CD4-positive, alpha-beta T cell (primary cell): ENCODE measurements at regions of chrX and their contacts with region 1.

Region 1: DNA sequence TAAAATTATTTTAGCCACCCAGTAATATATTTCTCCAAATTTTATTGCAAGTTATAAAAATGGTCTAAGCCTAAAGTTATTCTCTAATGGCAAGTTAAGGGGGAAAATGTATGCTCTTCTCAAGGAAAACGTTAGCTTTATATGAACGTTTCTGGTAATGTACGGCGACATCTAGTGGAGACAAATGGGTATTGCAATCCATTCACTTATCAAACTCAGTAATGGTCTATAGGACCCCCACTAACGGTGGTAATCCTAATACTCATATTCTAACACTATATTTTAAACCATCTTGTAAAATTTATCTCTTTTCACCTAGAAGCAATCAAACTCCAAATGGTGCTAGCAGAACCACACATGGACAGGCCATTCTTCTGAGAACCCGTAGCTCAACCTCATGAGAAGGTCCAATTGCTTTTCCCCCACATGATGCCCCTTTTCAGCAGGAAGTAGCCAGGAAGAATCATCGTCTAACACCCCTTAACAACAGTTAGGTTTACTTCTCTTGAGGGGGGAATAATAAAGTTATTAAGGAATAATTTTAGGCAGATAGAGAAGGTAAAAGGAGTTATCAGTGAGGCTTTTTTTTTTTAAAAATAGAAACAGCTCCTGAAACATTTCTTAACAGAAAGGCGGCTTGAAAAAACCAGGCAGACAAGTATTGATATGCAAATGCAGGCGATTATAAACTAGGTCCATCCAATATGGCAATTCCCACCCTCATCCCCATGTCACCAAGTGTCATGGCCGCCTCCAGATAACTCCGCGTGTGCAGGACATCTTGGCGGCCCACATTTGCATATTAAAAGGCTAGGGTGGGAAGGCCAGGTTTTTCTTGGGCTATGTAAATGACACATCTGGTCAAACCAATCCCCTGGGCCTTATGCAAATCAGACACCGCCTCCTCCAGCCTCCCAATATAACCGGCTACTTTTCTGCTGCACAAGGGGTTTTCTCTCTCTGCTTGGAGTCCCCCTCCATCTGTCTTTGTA is 35.0 kb downstream of the NUDT11 start:
- DNase-seq: peak in 4 of 14 experiments; percentile 27 to 65 (median 53)
- ATAC-seq: no peak
- H3K4me3 ChIP-seq: no peak overlapping the region
- H3K4me3 Mint-ChIP-seq: no peak overlapping the region
- H3K27ac ChIP-seq: no peak overlapping the region
- H3K27ac Mint-ChIP-seq: no peak overlapping the region
- H3K4me1 ChIP-seq: no peaks in the 10 kb centered on the region
- H3K4me1 Mint-ChIP-seq: no peaks in the 10 kb centered on the region
- H3K27me3 ChIP-seq: no peaks in the 10 kb centered on the region
- H3K27me3 Mint-ChIP-seq: no peaks in the 10 kb centered on the region
- CTCF ChIP-seq: peak; percentile 80

Region 2: GRCh38 chrX:49710729-49711304 is 1750.5 kb before region 1 on chrX:
- CTCF ChIA-PET with region 1: no interaction called
- POLR2A ChIA-PET with region 1: no interaction called
- intact Hi-C with region 1: no loop called
- DNase-seq: no peak
- ATAC-seq: no peak
- H3K4me3 ChIP-seq: no peak overlapping the region
- H3K4me3 Mint-ChIP-seq: no peak overlapping the region
- H3K27ac ChIP-seq: no peak overlapping the region
- H3K27ac Mint-ChIP-seq: no peak overlapping the region
- H3K4me1 ChIP-seq: no peaks in the 10 kb centered on the region
- H3K4me1 Mint-ChIP-seq: no peaks in the 10 kb centered on the region
- H3K27me3 ChIP-seq: no peaks in the 10 kb centered on the region
- H3K27me3 Mint-ChIP-seq: peaks cover 2% of the 10 kb centered on the region
- CTCF ChIP-seq: no peak

Region 3: GRCh38 chrX:50691820-50692219 is 769.5 kb before region 1 on chrX:
- CTCF ChIA-PET with region 1: interaction called, 5 read pairs
- POLR2A ChIA-PET with region 1: no interaction called
- intact Hi-C with region 1: loop called in 1 of 2 experiments (anchors 5 kb)
- DNase-seq: peak in 4 of 14 experiments; percentile 11 to 47 (median 41)
- ATAC-seq: peak; percentile 48
- H3K4me3 ChIP-seq: no peak overlapping the region
- H3K4me3 Mint-ChIP-seq: no peak overlapping the region
- H3K27ac ChIP-seq: no peak overlapping the region
- H3K27ac Mint-ChIP-seq: no peak overlapping the region
- H3K4me1 ChIP-seq: no peaks in the 10 kb centered on the region
- H3K4me1 Mint-ChIP-seq: no peaks in the 10 kb centered on the region
- H3K27me3 ChIP-seq: no peaks in the 10 kb centered on the region
- H3K27me3 Mint-ChIP-seq: peaks cover 11% of the 10 kb centered on the region
- CTCF ChIP-seq: peak; percentile 56

Region 4: GRCh38 chrX:50736656-50737055 is 724.7 kb before region 1 on chrX:
- CTCF ChIA-PET with region 1: no interaction called
- POLR2A ChIA-PET with region 1: no interaction called
- intact Hi-C with region 1: no loop called
- DNase-seq: no peak
- ATAC-seq: no peak
- H3K4me3 ChIP-seq: no peak overlapping the region
- H3K4me3 Mint-ChIP-seq: no peak overlapping the region
- H3K27ac ChIP-seq: no peak overlapping the region
- H3K27ac Mint-ChIP-seq: no peak overlapping the region
- H3K4me1 ChIP-seq: no peaks in the 10 kb centered on the region
- H3K4me1 Mint-ChIP-seq: no peaks in the 10 kb centered on the region
- H3K27me3 ChIP-seq: no peaks in the 10 kb centered on the region
- H3K27me3 Mint-ChIP-seq: peaks cover 8% of the 10 kb centered on the region
- CTCF ChIP-seq: no peak

Region 5: DNA sequence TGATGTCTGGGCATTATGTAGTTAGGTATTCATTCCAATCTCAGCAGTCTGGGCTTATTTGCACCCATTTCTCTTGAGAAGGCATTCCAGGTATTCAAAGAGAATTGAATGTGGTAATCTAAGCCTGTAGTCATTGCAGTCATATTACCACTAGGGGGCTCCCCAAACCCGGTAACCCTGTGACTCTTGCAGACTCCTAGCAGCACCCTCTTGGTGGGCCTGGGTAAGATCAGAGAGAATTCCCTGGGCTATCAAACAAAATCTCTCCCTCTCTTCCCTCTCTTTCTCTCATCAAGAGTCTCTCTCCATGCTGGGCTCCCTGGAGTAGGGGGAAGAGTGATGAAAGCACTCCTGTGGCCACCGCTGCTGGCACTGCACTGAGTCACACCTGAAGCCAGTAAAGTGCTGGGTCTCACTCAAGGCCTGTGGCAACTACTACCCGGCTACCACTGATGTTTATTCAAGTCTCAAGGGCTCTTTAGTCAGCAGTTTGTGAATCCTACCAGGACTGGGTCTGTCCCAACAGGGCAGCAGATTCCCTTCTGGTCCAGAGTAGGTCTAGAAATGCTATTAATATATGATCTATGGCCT is 316.4 kb before region 1 on chrX:
- CTCF ChIA-PET with region 1: interaction called, 3 read pairs
- POLR2A ChIA-PET with region 1: no interaction called
- intact Hi-C with region 1: loop called (anchors 2 kb)
- DNase-seq: peak in 7 of 14 experiments; percentile 1 to 40 (median 28)
- ATAC-seq: no peak
- H3K4me3 ChIP-seq: no peak overlapping the region
- H3K4me3 Mint-ChIP-seq: no peak overlapping the region
- H3K27ac ChIP-seq: no peak overlapping the region
- H3K27ac Mint-ChIP-seq: no peak overlapping the region
- H3K4me1 ChIP-seq: no peaks in the 10 kb centered on the region
- H3K4me1 Mint-ChIP-seq: no peaks in the 10 kb centered on the region
- H3K27me3 ChIP-seq: peaks cover 0 to 5% of the 10 kb centered on the region in 2 experiments
- H3K27me3 Mint-ChIP-seq: peaks cover 20% of the 10 kb centered on the region
- CTCF ChIP-seq: peak; percentile 26

Region 6: DNA sequence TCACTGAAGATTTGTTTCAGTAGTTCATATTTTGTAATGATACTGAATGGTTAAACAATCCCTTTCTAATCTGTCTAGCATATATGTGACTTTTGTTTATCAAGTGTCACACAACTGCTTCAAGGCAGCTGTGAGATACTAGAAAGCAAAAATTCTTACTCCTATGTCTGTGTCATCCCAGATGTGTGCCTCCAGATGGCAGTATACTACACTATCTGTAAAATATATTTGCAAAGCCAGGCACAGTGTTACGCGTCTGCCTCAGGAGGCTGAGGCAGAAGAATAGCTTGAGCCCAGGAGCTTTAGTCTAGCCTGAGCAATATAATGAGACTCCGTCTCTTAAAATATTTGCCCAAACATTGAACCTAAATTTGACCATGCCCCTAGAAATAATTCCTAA is 124.8 kb before region 1 on chrX:
- CTCF ChIA-PET with region 1: interaction called, 16 read pairs
- POLR2A ChIA-PET with region 1: no interaction called
- intact Hi-C with region 1: loop called (anchors 1 kb)
- DNase-seq: peak in 8 of 14 experiments; percentile 2 to 57 (median 26)
- ATAC-seq: peak; percentile 79
- H3K4me3 ChIP-seq: no peak overlapping the region
- H3K4me3 Mint-ChIP-seq: no peak overlapping the region
- H3K27ac ChIP-seq: no peak overlapping the region
- H3K27ac Mint-ChIP-seq: no peak overlapping the region
- H3K4me1 ChIP-seq: peaks cover 5% of the 10 kb centered on the region
- H3K4me1 Mint-ChIP-seq: no peaks in the 10 kb centered on the region
- H3K27me3 ChIP-seq: no peaks in the 10 kb centered on the region
- H3K27me3 Mint-ChIP-seq: no peaks in the 10 kb centered on the region
- CTCF ChIP-seq: peak; percentile 58

Region 7: GRCh38 chrX:51476930-51477329 is 15.6 kb after region 1 on chrX:
- CTCF ChIA-PET with region 1: interaction called, 14 read pairs
- POLR2A ChIA-PET with region 1: no interaction called
- intact Hi-C with region 1: no loop called
- DNase-seq: no peak
- ATAC-seq: no peak
- H3K4me3 ChIP-seq: no peak overlapping the region
- H3K4me3 Mint-ChIP-seq: no peak overlapping the region
- H3K27ac ChIP-seq: no peak overlapping the region
- H3K27ac Mint-ChIP-seq: no peak overlapping the region
- H3K4me1 ChIP-seq: no peaks in the 10 kb centered on the region
- H3K4me1 Mint-ChIP-seq: no peaks in the 10 kb centered on the region
- H3K27me3 ChIP-seq: no peaks in the 10 kb centered on the region
- H3K27me3 Mint-ChIP-seq: no peaks in the 10 kb centered on the region
- CTCF ChIP-seq: no peak

Region 8: DNA sequence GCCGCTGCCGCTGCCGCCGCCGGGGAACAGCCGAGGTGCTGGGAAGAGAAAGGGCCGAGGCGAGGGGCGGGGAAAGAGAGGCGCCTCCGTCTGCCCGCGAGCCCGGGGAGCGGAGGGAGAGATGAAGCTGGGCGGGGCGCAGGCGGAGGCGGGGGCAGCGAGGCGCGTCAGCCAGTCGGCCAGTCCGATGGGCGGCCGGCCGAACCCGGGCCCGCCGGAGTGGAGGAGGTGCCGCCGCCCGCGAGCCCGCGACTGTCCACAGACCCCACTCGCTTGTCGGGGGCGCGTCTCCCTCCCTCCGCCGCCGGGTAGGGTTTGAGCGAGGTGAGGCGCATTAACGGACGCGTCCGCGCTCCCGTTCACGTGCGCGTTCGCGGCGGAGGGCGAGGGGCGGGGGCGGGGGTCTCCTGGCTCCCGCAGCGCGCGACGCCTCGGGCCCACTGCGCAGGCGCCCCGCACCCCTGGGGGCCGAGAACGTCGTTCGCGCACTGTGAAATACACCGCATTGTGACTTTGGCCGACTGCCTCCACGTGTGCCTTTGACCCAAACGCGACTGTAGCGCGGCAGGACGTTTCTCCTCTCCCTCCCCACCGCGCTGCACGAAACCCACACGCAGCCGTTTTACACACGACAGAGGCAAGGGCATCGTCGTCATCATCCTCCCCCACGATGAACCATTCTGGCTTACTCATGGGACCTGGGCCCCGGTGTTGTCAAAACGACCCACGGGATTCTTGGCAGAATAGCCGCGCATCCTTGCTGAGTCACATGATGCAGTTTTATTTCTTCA is 35.3 kb after region 1 on chrX and contains the start of gene NUDT11:
- CTCF ChIA-PET with region 1: no interaction called
- POLR2A ChIA-PET with region 1: no interaction called
- intact Hi-C with region 1: no loop called
- DNase-seq: peak in 9 of 14 experiments; percentile 1 to 37 (median 15)
- ATAC-seq: peak; percentile 52
- H3K4me3 ChIP-seq: peak within 1 kb of the TSS; percentile 49
- H3K4me3 Mint-ChIP-seq: peak within 1 kb of the TSS; percentile 90
- H3K27ac ChIP-seq: no peak within 1 kb of the TSS
- H3K27ac Mint-ChIP-seq: no peak within 1 kb of the TSS
- H3K4me1 ChIP-seq: peaks cover 5% of the 10 kb centered on the region
- H3K4me1 Mint-ChIP-seq: no peaks in the 10 kb centered on the region
- H3K27me3 ChIP-seq: peaks cover 0 to 9% of the 10 kb centered on the region in 2 experiments
- H3K27me3 Mint-ChIP-seq: peaks cover 34% of the 10 kb centered on the region
- CTCF ChIP-seq: no peak
- total RNA-seq, gene NUDT11: 0.20 to 0.47 TPM